ENCODE measurements at regions of chr11 and their contacts with region 1.

Region 1: DNA sequence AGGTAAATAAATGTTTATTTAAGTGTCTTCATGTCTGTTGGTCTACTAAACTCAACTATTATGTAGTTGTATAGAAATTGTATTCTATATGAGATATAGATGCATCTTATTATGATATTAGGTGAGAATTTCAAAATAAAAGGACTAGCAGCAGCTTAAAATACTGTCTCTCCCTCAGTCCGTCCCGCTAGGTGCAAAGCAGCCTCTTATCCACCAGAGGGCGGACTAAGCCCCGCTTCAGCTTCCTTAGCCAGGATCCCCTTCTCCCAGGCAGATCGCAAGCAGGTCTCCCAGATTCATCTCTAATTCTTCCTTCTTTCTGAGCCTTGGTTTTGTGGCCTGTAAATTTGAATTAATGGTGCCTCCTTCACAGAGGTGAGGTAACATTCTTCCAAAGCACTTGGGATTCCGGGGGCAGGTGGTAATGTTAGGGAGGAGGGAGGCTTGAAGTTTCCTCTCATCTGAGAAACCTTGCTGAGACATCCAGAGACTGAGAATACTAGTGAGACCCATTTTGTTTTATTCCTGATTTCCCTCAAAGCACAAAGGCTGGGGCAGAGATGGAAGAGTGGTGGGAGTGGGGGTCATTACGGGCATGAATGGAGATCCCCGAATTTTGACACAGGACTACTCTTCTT is 13.5 kb upstream of the INSC start:
- DNase-seq: peak; percentile 72
- ATAC-seq: peak; percentile 78
- H3K4me3 ChIP-seq: no peak overlapping the region
- H3K4me3 Mint-ChIP-seq: no peak overlapping the region
- H3K27ac ChIP-seq: no peak overlapping the region
- H3K27ac Mint-ChIP-seq: no peak overlapping the region
- H3K4me1 ChIP-seq: peaks cover under 1 to 9% of the 10 kb centered on the region in 2 donors
- H3K4me1 Mint-ChIP-seq: peaks cover 10% of the 10 kb centered on the region
- H3K27me3 ChIP-seq: peaks cover 0 to 4% (median 0%) of the 10 kb centered on the region in 4 experiments
- H3K27me3 Mint-ChIP-seq: peaks cover 26% of the 10 kb centered on the region
- CTCF ChIP-seq: peak; percentile 98

Region 2: GRCh38 chr11:15113381-15113780 is 12.2 kb after region 1 on chr11:
- CTCF ChIA-PET with region 1: interaction called, 177 read pairs
- POLR2A ChIA-PET with region 1: interaction called, 4 read pairs
- intact Hi-C with region 1: no loop called
- DNase-seq: peak; percentile 87
- ATAC-seq: peak; percentile 92
- H3K4me3 ChIP-seq: peak overlapping the region in 1 of 5 experiments; percentile 31
- H3K4me3 Mint-ChIP-seq: peak overlapping the region; percentile 92
- H3K27ac ChIP-seq: peak overlapping the region in 1 of 2 donors; percentile 44
- H3K27ac Mint-ChIP-seq: peak overlapping the region; percentile 89
- H3K4me1 ChIP-seq: peaks cover 61 to 78% of the 10 kb centered on the region in 2 donors
- H3K4me1 Mint-ChIP-seq: peaks cover 71% of the 10 kb centered on the region
- H3K27me3 ChIP-seq: peaks cover 0 to 29% (median 8%) of the 10 kb centered on the region in 4 experiments
- H3K27me3 Mint-ChIP-seq: peaks cover 19% of the 10 kb centered on the region
- CTCF ChIP-seq: no peak

Region 3: GRCh38 chr11:15153231-15153630 is 52.0 kb after region 1 on chr11:
- CTCF ChIA-PET with region 1: interaction called, 131 read pairs
- POLR2A ChIA-PET with region 1: no interaction called
- intact Hi-C with region 1: no loop called
- DNase-seq: no peak
- ATAC-seq: no peak
- H3K4me3 ChIP-seq: no peak overlapping the region
- H3K4me3 Mint-ChIP-seq: no peak overlapping the region
- H3K27ac ChIP-seq: no peak overlapping the region
- H3K27ac Mint-ChIP-seq: no peak overlapping the region
- H3K4me1 ChIP-seq: peaks cover 18 to 22% of the 10 kb centered on the region in 2 donors
- H3K4me1 Mint-ChIP-seq: peaks cover 31% of the 10 kb centered on the region
- H3K27me3 ChIP-seq: no peaks in the 10 kb centered on the region
- H3K27me3 Mint-ChIP-seq: peaks cover 3% of the 10 kb centered on the region
- CTCF ChIP-seq: no peak

Region 4: GRCh38 chr11:15189641-15190365 is 88.6 kb after region 1 on chr11:
- CTCF ChIA-PET with region 1: interaction called, 13 read pairs
- POLR2A ChIA-PET with region 1: no interaction called
- intact Hi-C with region 1: no loop called
- DNase-seq: no peak
- ATAC-seq: no peak
- H3K4me3 ChIP-seq: no peak overlapping the region
- H3K4me3 Mint-ChIP-seq: no peak overlapping the region
- H3K27ac ChIP-seq: no peak overlapping the region
- H3K27ac Mint-ChIP-seq: no peak overlapping the region
- H3K4me1 ChIP-seq: no peaks in the 10 kb centered on the region
- H3K4me1 Mint-ChIP-seq: no peaks in the 10 kb centered on the region
- H3K27me3 ChIP-seq: peaks cover 0 to 8% (median 0%) of the 10 kb centered on the region in 4 experiments
- H3K27me3 Mint-ChIP-seq: peaks cover 14% of the 10 kb centered on the region
- CTCF ChIP-seq: no peak

Measured in B cell (primary cell).